ENCODE measurements at regions of chr1 and their contacts with region 1.

Region 1: DNA sequence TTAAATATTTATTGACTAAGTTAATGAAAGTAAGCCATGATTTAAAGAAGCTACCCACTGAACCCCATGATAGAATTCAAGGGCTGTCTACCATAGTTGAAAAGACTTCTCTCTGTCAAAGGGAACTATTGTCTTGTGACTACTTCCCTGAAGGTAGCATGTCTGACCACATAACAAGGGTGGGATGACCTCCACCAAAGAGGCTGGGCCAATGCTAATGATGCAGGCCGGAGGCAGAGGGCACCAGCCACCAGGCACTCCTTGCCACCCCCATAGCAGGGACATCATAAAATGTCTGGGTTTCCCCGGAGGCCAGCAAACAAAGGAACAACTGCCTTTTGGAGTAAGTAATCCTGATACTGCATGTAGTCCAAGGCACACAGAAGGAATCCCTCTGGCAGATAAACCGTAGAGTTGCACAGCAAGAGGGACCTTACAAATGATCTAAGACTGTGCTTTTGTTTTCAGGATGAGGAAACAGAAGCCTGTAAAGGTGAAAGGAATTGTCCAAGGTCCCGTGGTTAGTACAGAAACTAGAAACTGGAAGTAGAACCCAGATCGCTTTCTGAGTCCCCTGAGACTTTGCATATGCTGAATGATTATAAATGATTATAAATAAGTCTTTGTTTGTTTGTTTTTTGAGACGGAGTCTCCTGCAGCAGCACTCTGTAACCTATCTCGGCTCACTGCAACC is 33.5 kb upstream of the ITPKB start:
- DNase-seq: no peak

Region 2: DNA sequence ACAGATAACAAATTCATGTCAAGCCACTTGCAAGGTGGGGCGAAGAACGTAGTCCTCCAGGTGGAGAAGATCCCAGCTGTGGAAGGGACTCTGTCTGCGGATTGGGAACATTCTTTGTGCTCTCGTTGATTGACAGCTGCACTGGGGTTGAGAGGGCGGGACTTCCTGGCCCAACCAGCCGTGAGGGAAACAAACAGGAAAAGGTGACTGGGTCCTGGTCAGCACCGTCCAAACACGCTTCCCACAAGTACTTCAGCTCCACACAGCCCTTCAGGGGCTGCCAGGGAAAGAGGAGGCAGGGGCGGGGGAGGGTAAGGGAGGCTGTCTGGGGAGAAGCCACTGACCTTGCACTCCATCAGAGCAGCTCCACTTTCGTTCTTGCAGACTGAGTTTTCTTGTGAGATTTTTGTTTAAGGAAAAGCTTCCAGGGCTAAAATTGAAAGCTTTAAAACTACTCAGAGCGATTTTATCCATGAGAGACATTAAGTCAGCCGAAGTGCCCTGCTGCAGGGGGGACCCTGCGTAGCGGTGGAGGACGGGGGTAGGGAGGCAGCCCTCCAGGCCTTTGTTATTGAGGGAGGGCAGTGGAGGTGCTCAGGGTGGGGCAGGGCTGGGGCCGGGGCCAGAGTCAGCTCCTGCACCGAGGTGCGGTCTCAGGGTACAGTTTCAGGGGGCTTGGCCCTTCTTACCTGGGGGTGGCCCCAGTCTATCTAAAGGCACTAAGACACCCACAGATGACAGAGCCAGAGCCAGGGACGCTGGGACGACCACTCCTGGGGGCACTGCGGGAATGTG is 245.6 kb before region 1 on chr1:
- intact Hi-C with region 1: no loop called
- DNase-seq: no peak

Region 3: DNA sequence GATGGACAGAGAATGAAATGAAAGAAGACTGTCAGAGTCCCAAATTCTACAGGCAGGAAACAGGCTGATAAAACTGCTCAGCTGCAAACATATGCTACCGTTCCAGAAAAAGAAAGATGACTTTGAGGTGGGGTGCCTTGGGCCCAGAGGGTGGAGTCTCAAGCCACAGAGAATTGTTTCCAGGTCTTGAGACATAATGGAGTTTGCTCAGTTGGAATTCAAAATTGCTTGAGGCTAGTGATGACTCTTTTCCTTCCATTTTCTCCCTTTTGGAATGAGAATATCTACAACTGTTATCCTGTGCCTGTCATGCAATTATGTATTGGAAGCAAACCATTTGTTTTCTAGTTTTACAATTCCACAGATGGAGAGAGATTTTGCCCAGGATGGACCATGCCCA is 74.2 kb after region 1 on chr1:
- intact Hi-C with region 1: loop called in 1 of 2 experiments (anchors 2 kb)
- DNase-seq: no peak

Region 4: DNA sequence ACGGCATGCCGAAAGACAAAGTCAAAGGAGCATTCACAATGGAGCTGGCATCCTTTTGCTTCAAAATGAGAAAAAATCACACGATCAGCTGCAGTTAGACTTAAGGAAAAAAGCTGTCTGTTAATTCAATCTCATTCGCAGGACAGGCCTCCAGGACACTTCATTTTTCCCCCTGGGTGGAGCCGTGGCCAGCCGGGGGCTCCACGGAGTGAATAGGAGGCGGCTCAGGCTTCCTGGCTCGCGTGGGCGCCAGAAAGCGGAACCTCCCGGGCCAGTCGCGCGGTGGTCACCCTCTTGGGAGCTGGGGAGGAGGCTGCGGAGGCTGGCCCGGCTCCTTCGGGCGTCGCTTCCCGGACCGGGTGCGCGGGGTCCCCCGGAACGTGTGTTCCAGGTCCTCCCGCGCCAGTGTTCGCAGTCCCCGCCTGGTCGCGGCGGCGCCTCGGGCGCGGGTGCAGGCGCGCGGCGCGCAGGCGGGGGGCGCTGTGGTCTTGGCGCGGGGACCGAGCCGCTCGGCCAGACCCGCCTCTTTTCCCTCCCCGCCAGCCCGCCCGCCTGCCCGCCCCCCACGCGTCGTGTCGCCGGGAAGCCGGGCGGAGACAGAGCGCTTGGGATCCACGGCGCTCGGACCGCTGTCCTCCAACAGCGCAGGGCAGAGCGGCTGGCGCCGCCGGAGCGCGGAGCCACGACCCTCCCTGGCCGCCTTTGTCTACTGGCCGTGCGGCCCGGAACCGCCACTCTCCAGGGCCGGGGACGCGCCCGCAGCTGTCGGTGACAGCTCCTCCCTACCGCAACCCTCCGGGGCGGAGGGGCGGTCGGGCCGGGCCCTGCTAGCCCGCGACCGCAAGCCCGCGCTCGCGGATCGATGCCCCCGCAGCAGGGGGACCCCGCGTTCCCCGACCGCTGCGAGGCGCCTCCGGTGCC is 1962.5 kb after region 1 on chr1 and contains the start of gene RHOU:
- intact Hi-C with region 1: no loop called
- DNase-seq: peak; percentile 94
- total RNA-seq, gene RHOU: 15.7 to 24.6 TPM

Measured in posterior vena cava (tissue), 2 donors.